ENCODE measurements at regions of chr3 and their contacts with region 1.

Region 1: GRCh38 chr3:72818092-72818773 is 30.0 kb downstream of the SHQ1 start:
- DNase-seq: peak; percentile 4
- ATAC-seq: peak; percentile 57; the same call in 1 of the 2 replicates
- H3K4me3 ChIP-seq: no peak overlapping the region
- H3K27ac ChIP-seq: no peak overlapping the region
- H3K4me1 ChIP-seq: peaks cover 2 to 11% of the 10 kb centered on the region in 2 experiments; a peak in 3 of 4 replicates
- H3K27me3 ChIP-seq: no peaks in the 10 kb centered on the region
- CTCF ChIP-seq: peak; percentile 53 to 69 (median 67); a peak in 5 of 6 replicates
- POLR2A ChIP-seq: no peak
- RAD21 ChIP-seq: peak; percentile 83

Region 2: DNA sequence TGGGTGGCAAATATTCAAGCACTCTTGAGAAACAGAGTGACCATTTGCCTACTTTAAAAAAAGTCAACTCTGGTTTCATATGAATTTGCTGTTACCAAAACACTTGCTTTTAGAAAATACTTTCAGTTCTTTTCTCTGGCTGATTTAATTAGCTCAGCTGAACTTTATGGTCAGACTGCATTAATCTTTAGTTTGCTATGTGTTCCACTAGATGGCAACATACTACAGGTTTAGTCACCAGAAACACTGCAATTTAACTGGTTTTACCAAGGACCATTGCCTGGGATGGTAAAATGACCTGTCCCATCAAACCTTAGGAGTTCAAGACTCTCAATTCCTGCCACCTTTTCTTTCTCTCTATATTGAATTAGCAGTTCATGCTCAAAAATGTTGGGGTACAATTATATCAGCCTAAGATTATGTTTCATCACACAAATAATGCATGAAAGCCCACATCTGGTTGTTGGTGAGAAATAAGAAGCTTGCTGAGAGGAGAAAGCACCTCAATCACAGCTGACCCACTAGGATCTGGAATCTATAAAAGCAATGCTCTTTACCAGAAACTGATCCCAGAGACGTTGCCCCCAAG is 1107.2 kb before region 1 on chr3:
- CTCF ChIA-PET with region 1: interaction called, 4 read pairs
- POLR2A ChIA-PET with region 1: no interaction called
- RAD21 ChIA-PET with region 1: no interaction called
- intact Hi-C with region 1: loop called (anchors 5 kb)
- DNase-seq: peak; percentile 21
- ATAC-seq: peak; percentile 80
- H3K4me3 ChIP-seq: no peak overlapping the region
- H3K27ac ChIP-seq: no peak overlapping the region
- H3K4me1 ChIP-seq: no peaks in the 10 kb centered on the region
- H3K27me3 ChIP-seq: no peaks in the 10 kb centered on the region
- CTCF ChIP-seq: peak; percentile 47 to 70 (median 48); a peak in 5 of 6 replicates
- POLR2A ChIP-seq: no peak
- RAD21 ChIP-seq: peak; percentile 78

Region 3: GRCh38 chr3:71926262-71926600 is 892.0 kb before region 1 on chr3:
- CTCF ChIA-PET with region 1: interaction called, 8 read pairs
- POLR2A ChIA-PET with region 1: no interaction called
- RAD21 ChIA-PET with region 1: no interaction called
- intact Hi-C with region 1: loop called (anchors 1 kb)
- DNase-seq: peak; percentile 65
- ATAC-seq: peak; percentile 90
- H3K4me3 ChIP-seq: no peak overlapping the region
- H3K27ac ChIP-seq: no peak overlapping the region
- H3K4me1 ChIP-seq: 0 out of 4 replicates have a peak, but pooled peaks cover 0 to 3% of the 10 kb centered on the region in 2 experiments
- H3K27me3 ChIP-seq: no peaks in the 10 kb centered on the region
- CTCF ChIP-seq: peak; percentile 62 to 85 (median 77)
- POLR2A ChIP-seq: no peak
- RAD21 ChIP-seq: peak; percentile 83

Region 4: DNA sequence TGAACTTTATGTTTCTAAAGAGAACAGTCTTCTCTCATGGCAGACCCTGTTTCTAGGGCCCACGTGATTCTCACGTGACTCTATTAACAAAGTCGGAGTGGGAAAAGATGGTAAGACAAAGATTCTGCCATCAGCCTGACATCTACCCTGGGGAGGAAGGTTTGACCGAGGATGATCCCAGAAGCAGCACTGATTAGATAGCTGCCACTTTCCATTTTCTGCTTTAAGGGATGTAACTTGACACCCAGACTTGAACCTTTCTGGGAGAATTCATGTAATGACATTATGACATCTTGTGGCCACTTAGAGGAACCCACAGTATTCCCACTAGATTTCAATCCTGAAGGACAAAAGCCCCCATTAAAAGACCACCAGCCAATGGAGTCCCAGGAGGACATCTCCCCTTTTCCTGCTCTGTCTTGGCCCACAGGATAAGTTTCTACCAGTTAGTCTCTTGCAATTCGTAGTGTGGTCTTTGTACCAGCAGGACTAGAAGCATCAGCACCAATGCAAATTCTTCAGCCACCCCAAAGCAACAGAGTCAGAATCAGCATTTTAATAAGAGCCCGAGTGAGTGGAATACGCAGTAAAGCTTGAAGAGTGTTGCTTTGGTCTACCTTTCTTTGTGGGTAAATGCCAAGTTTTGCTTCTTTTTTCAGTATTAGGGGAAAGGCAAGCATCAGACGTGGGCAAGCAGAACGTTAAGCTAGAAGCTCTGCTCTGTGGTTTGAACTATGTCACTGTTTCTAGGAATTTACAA is 552.8 kb before region 1 on chr3:
- CTCF ChIA-PET with region 1: interaction called, 5 read pairs
- POLR2A ChIA-PET with region 1: no interaction called
- RAD21 ChIA-PET with region 1: no interaction called
- intact Hi-C with region 1: loop called (anchors 5 kb)
- DNase-seq: peak; percentile 21
- ATAC-seq: peak; percentile 42; the same call in 1 of the 2 replicates
- H3K4me3 ChIP-seq: no peak overlapping the region
- H3K27ac ChIP-seq: no peak overlapping the region
- H3K4me1 ChIP-seq: peaks cover 5 to 8% of the 10 kb centered on the region in 2 experiments; a peak in 3 of 4 replicates
- H3K27me3 ChIP-seq: no peaks in the 10 kb centered on the region
- CTCF ChIP-seq: peak; percentile 24 to 45 (median 44); a peak in 3 of 6 replicates
- POLR2A ChIP-seq: no peak
- RAD21 ChIP-seq: peak; percentile 73

Region 5: GRCh38 chr3:72310419-72311380 is 507.5 kb before region 1 on chr3:
- CTCF ChIA-PET with region 1: no interaction called
- POLR2A ChIA-PET with region 1: no interaction called
- RAD21 ChIA-PET with region 1: no interaction called
- intact Hi-C with region 1: no loop called
- DNase-seq: no peak
- ATAC-seq: no peak
- H3K4me3 ChIP-seq: no peak overlapping the region
- H3K27ac ChIP-seq: no peak overlapping the region
- H3K4me1 ChIP-seq: no peaks in the 10 kb centered on the region
- H3K27me3 ChIP-seq: 0 out of 2 replicates have a peak, but pooled peaks cover 6% of the 10 kb centered on the region
- CTCF ChIP-seq: no peak
- POLR2A ChIP-seq: no peak
- RAD21 ChIP-seq: no peak

Region 6: DNA sequence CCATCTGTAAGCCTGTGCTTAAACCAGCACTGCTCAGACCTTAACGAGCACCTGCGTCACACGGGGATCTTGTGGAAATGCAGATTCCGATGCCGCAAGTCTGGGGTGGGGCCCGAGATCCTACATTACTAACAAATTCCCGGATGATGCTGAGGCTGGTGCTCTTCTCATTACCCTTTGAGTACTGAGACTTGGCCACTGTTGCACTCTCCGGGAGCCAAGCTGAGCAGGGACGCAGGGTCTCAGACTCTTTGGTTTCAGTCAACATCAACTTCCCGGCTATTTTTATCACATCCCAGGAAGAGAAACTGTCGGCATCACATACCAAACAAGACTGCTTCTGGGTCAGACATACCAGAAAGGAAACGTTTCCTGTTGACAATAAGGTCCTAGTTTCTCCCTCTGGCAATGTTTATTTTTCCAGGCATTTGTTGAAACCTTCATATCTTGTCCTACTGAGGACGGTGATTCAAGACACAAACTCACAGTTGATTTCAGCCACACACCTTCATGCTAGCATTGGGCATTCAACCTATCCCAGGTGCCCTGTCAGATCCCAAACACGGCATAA is 246.5 kb before region 1 on chr3:
- CTCF ChIA-PET with region 1: no interaction called
- POLR2A ChIA-PET with region 1: no interaction called
- RAD21 ChIA-PET with region 1: no interaction called
- intact Hi-C with region 1: no loop called
- DNase-seq: no peak
- ATAC-seq: no peak
- H3K4me3 ChIP-seq: no peak overlapping the region
- H3K27ac ChIP-seq: no peak overlapping the region
- H3K4me1 ChIP-seq: no peaks in the 10 kb centered on the region
- H3K27me3 ChIP-seq: no peaks in the 10 kb centered on the region
- CTCF ChIP-seq: no peak
- POLR2A ChIP-seq: no peak
- RAD21 ChIP-seq: no peak

Region 7: GRCh38 chr3:72665701-72666443 is 152.4 kb before region 1 on chr3:
- CTCF ChIA-PET with region 1: interaction called, 20 read pairs
- POLR2A ChIA-PET with region 1: no interaction called
- RAD21 ChIA-PET with region 1: interaction called, 3 to 4 read pairs
- intact Hi-C with region 1: loop called (anchors 1 kb)
- DNase-seq: no peak
- ATAC-seq: peak; percentile 85
- H3K4me3 ChIP-seq: no peak overlapping the region
- H3K27ac ChIP-seq: no peak overlapping the region
- H3K4me1 ChIP-seq: peaks cover 6 to 9% of the 10 kb centered on the region in 2 experiments
- H3K27me3 ChIP-seq: no peaks in the 10 kb centered on the region
- CTCF ChIP-seq: peak; percentile 57 to 76 (median 65); a peak in 5 of 6 replicates
- POLR2A ChIP-seq: no peak
- RAD21 ChIP-seq: peak; percentile 77